Activated CD4-positive, alpha-beta memory T cell treated with anti-CD3 and anti-CD28 coated beads, Interleukin-2, amount 10 ng/mL, durations not matched to agents 7 days and 5 days (primary cell): ENCODE measurements at regions of chr2 and their contacts with region 1.

Region 1: DNA sequence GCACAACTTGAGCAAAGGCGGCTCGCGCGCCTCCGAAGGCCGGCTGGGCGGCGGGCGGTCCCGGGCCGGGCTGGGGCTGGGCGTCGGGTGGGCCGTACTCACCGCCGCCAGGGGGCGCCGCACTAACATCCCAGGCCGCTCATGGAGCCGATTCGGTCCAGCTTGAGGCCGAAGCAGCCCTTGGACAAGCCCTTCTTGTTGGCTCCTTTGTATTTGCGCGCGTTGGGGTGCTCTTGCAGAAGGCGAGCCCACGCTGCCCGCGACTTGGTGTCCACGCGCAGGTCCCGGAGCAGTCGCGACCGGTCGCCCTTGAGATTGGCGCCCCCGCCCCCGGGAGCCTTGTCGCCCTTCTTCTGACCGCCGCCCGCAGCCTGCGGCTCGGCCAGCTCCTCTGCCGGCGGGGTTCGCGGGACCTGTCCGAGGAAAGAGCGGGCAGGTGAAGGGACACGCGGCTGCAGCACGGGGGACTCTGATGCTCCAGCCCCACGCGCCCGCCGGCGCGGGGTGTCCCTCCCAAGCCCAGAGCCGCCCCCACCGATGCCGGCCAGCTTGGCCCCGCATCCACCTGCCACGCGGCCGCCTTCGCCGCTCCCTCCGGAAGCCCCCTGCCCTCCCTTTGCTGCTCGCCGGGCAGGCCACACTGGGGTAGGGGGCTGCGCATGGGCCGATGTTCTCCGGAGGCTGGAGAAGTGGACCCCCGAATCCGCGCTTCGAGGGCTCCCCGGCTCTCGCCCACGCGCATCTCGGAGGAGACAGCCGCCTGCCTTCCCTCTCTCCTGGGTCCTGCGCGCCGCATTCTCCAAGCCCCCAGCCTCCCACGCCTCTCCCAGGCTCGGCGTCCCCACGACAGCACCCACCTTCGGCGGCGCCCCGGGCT is 655 bp downstream of the NPPC start:
- DNase-seq: peak; percentile 70
- H3K4me3 Mint-ChIP-seq: peak overlapping the region; percentile 24
- H3K27ac Mint-ChIP-seq: no peak overlapping the region
- H3K4me1 Mint-ChIP-seq: peaks cover 12% of the 10 kb centered on the region
- H3K27me3 Mint-ChIP-seq: peaks cover 49% of the 10 kb centered on the region

Region 2: GRCh38 chr2:231642631-231643494 is 282.7 kb before region 1 on chr2:
- CTCF ChIA-PET with region 1: no interaction called
- POLR2A ChIA-PET with region 1: no interaction called
- DNase-seq: peak; percentile 66
- H3K4me3 Mint-ChIP-seq: peak overlapping the region; percentile 64
- H3K27ac Mint-ChIP-seq: peak overlapping the region; percentile 71
- H3K4me1 Mint-ChIP-seq: peaks cover 19% of the 10 kb centered on the region
- H3K27me3 Mint-ChIP-seq: no peaks in the 10 kb centered on the region

Region 3: DNA sequence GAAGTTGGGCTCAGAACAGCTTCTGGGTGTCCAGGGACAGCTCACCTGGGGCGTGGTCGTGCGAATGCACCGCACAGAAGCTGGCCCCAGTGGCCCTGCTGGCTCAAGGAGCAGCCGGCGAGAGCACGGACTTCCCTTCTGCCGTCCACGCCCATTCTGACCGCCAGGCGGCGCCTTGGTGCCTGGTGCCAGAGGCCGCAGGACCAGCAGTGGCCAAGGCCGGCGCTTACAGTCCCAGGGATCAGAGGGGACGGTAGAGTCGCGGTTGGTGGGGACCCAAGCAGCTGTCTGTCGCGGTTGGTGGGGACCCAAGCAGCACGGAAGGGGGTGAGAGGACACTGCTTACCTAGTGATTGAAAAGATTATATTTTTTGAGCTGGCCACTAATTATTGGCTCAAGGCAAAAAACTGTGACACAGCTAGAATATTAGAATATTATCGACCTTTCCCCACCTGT is 25.0 kb before region 1 on chr2:
- CTCF ChIA-PET with region 1: interaction called, 11 read pairs
- POLR2A ChIA-PET with region 1: no interaction called
- DNase-seq: peak; percentile 61
- H3K4me3 Mint-ChIP-seq: no peak overlapping the region
- H3K27ac Mint-ChIP-seq: no peak overlapping the region
- H3K4me1 Mint-ChIP-seq: no peaks in the 10 kb centered on the region
- H3K27me3 Mint-ChIP-seq: peaks cover 6% of the 10 kb centered on the region

Region 4: DNA sequence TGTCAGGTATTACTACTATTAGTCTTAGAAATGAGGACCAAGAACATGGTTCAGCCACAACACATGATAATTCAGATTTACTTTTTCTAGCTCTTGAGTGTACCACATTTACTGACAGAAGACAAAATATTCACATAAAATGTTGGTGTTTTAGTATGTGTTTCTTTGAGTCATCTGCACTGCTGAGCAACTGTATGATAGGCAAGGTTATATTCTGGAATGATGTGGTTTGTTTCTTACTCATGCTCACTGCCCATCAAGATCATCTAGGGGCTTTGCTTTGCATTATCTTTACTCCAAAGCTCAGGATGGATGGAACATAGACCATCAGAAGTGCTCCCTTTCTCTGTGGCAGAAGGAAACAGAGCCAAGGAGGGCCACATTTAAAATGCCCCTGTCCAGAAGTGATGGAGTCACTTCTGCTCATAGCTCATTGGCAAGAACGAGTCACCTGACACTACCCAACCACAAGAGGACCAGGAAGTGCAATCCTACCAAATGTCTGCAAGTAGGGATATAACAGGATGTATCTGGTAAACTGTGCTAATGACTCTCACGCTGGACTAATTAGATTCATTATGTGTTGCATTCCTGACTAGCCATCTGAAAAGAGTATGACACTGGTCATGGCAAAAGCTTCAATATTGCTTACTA is 117.5 kb after region 1 on chr2:
- CTCF ChIA-PET with region 1: no interaction called
- POLR2A ChIA-PET with region 1: no interaction called
- DNase-seq: no peak
- H3K4me3 Mint-ChIP-seq: no peak overlapping the region
- H3K27ac Mint-ChIP-seq: no peak overlapping the region
- H3K4me1 Mint-ChIP-seq: peaks cover 6% of the 10 kb centered on the region
- H3K27me3 Mint-ChIP-seq: no peaks in the 10 kb centered on the region

Region 5: GRCh38 chr2:232142049-232142448 is 216.5 kb after region 1 on chr2:
- CTCF ChIA-PET with region 1: interaction called, 22 read pairs
- POLR2A ChIA-PET with region 1: interaction called, 6 read pairs
- DNase-seq: peak; percentile 32
- H3K4me3 Mint-ChIP-seq: no peak overlapping the region
- H3K27ac Mint-ChIP-seq: no peak overlapping the region
- H3K4me1 Mint-ChIP-seq: peaks cover 12% of the 10 kb centered on the region
- H3K27me3 Mint-ChIP-seq: no peaks in the 10 kb centered on the region

Region 6: DNA sequence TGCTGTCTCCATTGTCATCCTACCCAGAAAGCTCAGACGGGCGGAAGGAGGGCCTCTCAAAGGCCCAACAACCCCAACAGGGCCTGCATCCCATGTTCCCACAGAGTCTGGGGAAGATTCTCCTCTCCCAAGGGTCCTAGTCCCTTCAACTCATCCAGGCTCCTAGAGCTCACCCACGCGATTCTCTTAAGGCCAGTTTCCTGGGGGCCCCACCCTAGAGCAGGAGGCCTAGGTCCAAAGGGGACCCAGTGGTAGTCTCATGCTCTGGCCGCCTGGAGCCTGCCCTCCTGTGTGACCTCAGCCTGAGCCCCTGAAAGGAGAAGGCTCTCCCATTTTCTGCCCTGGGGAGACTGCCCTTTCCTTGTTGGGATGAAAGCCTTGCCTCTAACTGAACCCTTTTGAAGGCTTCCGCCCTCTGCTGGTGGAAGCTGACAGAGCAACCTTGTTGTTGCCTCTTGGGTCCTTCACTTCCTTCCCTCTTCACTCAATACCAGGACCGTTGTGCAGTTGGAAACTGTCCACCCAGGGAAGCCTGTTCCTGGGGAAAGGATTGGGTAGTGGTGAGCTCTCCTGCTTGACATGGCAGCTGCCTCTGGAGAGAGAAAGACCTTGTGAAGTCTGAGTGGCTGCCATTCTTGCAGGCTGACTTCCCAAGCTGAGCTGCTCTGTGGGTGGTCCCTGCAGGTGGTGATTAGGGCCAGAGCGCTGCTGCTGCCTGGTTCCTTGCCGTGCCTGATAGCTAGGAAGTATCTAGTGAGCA is 367.0 kb after region 1 on chr2:
- CTCF ChIA-PET with region 1: interaction called, 16 read pairs
- POLR2A ChIA-PET with region 1: no interaction called
- DNase-seq: peak; percentile 76
- H3K4me3 Mint-ChIP-seq: no peak overlapping the region
- H3K27ac Mint-ChIP-seq: no peak overlapping the region
- H3K4me1 Mint-ChIP-seq: peaks cover 3% of the 10 kb centered on the region
- H3K27me3 Mint-ChIP-seq: no peaks in the 10 kb centered on the region